Activated T-helper 2 cell treated with anti-CD3 and anti-CD28 coated beads, Interferon-gamma antibody, Interleukin-2, Interleukin-4, amounts not matched to agents 10 μg/mL and 5 μg/mL and 100 μg/mL, durations not matched to agents 14 hours and 24 hours and 36 hours (primary cell): ENCODE measurements at regions of chr1 and their contacts with region 1.

Region 1: DNA sequence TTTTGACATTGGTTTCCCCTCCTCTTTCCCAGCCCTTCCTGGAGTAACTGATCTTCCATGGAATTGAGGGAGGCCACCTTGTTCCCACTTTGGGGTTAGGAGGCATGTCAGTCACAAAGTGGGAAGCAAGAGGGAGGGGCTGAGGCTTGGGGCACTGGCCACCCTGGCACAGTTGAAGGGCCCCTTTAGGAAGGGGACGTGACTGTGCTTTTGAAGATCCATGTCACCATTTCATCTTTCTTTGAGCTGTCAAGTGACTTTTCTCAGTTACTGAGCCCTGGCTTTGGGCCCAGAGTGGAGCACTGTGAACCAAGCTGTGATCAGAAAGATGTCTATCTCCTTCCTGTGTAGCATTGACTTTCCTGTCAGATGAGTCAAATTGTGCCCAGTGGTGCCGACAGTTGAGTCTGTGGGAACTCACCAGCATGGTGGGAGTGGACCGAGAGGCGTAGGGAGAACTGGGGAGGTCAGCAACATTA is 38.5 kb upstream of the TDRD10 start:
- DNase-seq: peak; percentile 66
- H3K4me3 Mint-ChIP-seq: peak overlapping the region; percentile 11
- H3K27ac Mint-ChIP-seq: peak overlapping the region; percentile 67
- H3K4me1 Mint-ChIP-seq: peaks cover 57% of the 10 kb centered on the region
- H3K27me3 Mint-ChIP-seq: no peaks in the 10 kb centered on the region

Region 2: DNA sequence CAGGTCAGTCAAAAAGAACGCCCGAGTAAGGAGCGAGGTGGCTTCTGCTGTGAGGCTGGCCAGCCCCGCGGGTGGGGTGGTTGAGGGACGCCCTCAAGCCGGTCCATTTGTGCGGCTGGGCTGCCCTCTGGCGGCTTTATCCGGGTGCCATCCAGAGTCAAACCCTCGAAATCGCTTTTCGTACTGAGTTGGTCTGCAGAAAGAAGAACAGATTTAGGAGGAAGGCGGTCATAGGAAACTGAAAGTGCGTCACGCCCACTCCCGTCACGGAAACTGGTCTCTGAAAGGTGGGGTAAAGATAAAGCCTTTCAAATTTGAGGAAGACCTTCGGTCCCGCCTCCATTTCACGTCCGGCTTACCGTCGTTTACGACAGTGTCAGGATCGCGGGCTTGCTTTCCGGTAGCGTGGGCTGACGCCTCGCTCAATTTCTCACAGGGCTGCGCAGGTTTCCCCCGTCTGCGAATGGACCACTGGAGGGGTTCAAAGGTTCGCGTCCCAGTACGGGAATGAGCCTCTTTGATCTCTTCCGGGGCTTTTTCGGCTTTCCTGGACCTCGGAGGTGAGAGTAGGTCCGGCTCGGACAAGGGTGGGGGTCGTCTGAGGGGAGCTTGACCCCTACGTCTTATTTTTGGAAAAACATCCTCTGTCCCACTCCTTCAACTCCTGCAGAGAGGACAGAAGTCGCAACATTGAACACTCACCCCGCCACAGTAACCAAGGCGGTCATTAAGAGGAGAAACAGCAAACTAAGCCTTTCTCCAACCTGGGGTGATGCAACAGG is 191.1 kb before region 1 on chr1 and contains the start of gene HAX1:
- intact Hi-C with region 1: no loop called
- DNase-seq: peak; percentile 96
- H3K4me3 Mint-ChIP-seq: peak within 1 kb of the TSS; percentile 96
- H3K27ac Mint-ChIP-seq: peak within 1 kb of the TSS; percentile 94
- H3K4me1 Mint-ChIP-seq: peaks cover 28% of the 10 kb centered on the region
- H3K27me3 Mint-ChIP-seq: no peaks in the 10 kb centered on the region
- total RNA-seq, gene HAX1: 112 and 113 TPM in 2 replicates

Region 3: GRCh38 chr1:154335025-154335714 is 128.4 kb before region 1 on chr1:
- intact Hi-C with region 1: loop called (anchors 5 kb)
- DNase-seq: peak; percentile 79
- H3K4me3 Mint-ChIP-seq: no peak overlapping the region
- H3K27ac Mint-ChIP-seq: peak overlapping the region; percentile 76
- H3K4me1 Mint-ChIP-seq: peaks cover 49% of the 10 kb centered on the region
- H3K27me3 Mint-ChIP-seq: no peaks in the 10 kb centered on the region

Region 4: GRCh38 chr1:154404984-154405761 is 58.4 kb before region 1 on chr1 and contains the start of gene IL6R:
- intact Hi-C with region 1: loop called (anchors 1 kb)
- DNase-seq: peak; percentile 48
- H3K4me3 Mint-ChIP-seq: peak within 1 kb of the TSS; percentile 73
- H3K27ac Mint-ChIP-seq: peak within 1 kb of the TSS; percentile 64
- H3K4me1 Mint-ChIP-seq: peaks cover 66% of the 10 kb centered on the region
- H3K27me3 Mint-ChIP-seq: peaks cover 6% of the 10 kb centered on the region
- total RNA-seq, gene IL6R: 1.6 and 2.2 TPM in 2 replicates

Region 5: DNA sequence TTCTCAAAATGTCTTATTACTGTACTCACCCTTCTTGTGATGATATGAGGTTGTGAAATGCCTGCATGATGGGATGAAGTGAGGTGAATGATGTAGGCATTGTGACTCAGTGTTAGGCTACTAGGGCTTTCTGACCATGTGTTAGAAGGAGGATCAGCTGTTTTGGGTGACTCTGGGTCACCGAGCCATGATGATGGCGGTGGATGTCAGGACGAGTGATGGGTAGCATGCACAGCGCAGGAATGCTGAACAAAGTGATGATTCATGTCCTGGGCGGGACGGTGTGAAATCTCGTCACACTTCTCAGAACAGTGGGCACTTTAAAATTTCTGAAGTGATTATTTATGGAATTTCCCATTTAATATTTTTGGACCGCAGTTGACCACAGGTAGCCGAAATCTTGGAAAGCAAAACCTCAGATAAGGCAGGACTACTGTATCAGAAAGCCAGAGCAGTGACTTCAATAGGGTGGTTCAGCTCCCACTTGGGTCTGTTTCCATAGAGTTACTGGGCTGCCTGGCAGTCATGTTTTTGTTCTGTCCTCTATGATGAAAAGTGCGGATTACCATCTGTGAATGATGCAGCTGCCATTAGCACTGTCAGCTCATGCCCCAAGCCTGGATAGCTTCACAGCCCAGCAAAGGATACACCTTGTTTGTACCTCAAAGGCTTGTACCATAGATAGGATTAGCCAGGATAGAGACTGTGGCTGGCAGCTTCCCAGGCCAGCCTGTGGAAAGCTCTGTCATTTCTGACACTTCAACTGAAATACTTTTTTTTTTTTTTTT is 31.8 kb before region 1 on chr1:
- intact Hi-C with region 1: no loop called
- DNase-seq: no peak
- H3K4me3 Mint-ChIP-seq: no peak overlapping the region
- H3K27ac Mint-ChIP-seq: peak overlapping the region; percentile 7
- H3K4me1 Mint-ChIP-seq: peaks cover 21% of the 10 kb centered on the region
- H3K27me3 Mint-ChIP-seq: no peaks in the 10 kb centered on the region

Region 6: GRCh38 chr1:154598871-154599635 is 135.5 kb after region 1 on chr1:
- intact Hi-C with region 1: no loop called
- DNase-seq: no peak
- H3K4me3 Mint-ChIP-seq: no peak overlapping the region
- H3K27ac Mint-ChIP-seq: peak overlapping the region; percentile 59
- H3K4me1 Mint-ChIP-seq: peaks cover 32% of the 10 kb centered on the region
- H3K27me3 Mint-ChIP-seq: no peaks in the 10 kb centered on the region